ENCODE measurements at regions of chr11 and their contacts with region 1.

Region 1: GRCh38 chr11:44133335-44133946 is 38.0 kb downstream of the EXT2 start:
- DNase-seq: peak; percentile 20
- CTCF ChIP-seq: peak; percentile 37

Region 2: GRCh38 chr11:44104481-44105294 is 28.8 kb before region 1 on chr11:
- CTCF ChIA-PET with region 1: interaction called, 12 read pairs
- POLR2A ChIA-PET with region 1: no interaction called
- DNase-seq: no peak
- CTCF ChIP-seq: no peak

Region 3: GRCh38 chr11:44171518-44171917 is 38.1 kb after region 1 on chr11:
- CTCF ChIA-PET with region 1: no interaction called
- POLR2A ChIA-PET with region 1: no interaction called
- DNase-seq: no peak
- CTCF ChIP-seq: no peak

Measured in GM10248 (cell line).